ENCODE measurements at regions of chr19 and their contacts with region 1.

Region 1: DNA sequence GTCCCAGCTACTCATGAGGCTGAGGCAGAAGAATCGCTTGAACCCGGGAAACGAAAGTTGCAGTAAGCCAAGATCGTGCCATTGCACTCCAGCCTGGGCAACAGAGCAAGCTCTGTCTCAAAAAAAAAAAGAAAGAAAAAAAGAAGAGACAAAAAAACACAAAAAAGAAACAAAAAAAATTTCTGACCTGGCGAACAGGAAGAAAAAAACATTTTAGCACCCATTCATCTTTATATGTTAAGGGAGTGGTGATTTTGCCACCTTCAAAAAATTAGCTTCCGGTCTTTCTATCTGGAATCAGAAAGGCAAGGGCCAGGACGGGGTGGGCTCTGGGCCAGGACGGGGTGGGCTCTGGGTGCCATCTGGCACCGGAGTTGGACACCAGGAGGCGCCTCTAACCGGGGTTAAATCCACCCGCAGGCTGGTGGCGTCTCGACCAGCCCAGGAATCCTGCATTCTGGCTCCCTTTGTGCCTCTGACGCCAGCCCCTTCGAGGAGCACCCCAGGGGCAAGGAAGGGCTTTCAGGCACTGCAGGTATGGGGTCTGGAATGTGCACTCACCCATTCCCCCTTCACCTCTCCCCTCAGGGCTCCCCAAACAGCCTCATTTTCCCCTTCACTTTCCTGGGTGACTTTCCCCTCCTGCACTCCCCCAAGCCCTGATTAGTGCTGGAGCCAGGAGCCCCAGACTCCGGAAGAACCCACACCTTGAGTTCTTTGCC is 10.4 kb upstream of the ZSWIM4 start:
- DNase-seq: peak; percentile 85
- ATAC-seq: peak; percentile 78
- H3K4me3 Mint-ChIP-seq: peak overlapping the region; percentile 14
- H3K27ac Mint-ChIP-seq: peak overlapping the region; percentile 41
- H3K4me1 Mint-ChIP-seq: peaks cover 32% of the 10 kb centered on the region
- H3K27me3 Mint-ChIP-seq: no peaks in the 10 kb centered on the region
- CTCF ChIP-seq: peak; percentile 77

Region 2: GRCh38 chr19:13814550-13814949 is 29.7 kb after region 1 on chr19:
- CTCF ChIA-PET with region 1: no interaction called
- POLR2A ChIA-PET with region 1: no interaction called
- intact Hi-C with region 1: no loop called
- DNase-seq: no peak
- ATAC-seq: no peak
- H3K4me3 Mint-ChIP-seq: no peak overlapping the region
- H3K27ac Mint-ChIP-seq: no peak overlapping the region
- H3K4me1 Mint-ChIP-seq: no peaks in the 10 kb centered on the region
- H3K27me3 Mint-ChIP-seq: no peaks in the 10 kb centered on the region
- CTCF ChIP-seq: no peak

Region 3: GRCh38 chr19:13833330-13834243 is 48.7 kb after region 1 on chr19:
- CTCF ChIA-PET with region 1: interaction called, 15 read pairs
- POLR2A ChIA-PET with region 1: interaction called, 6 read pairs
- intact Hi-C with region 1: no loop called
- DNase-seq: peak; percentile 96
- ATAC-seq: peak; percentile 85
- H3K4me3 Mint-ChIP-seq: peak overlapping the region; percentile 68
- H3K27ac Mint-ChIP-seq: peak overlapping the region; percentile 87
- H3K4me1 Mint-ChIP-seq: peaks cover 39% of the 10 kb centered on the region
- H3K27me3 Mint-ChIP-seq: no peaks in the 10 kb centered on the region
- CTCF ChIP-seq: peak; percentile 65

Measured in activated CD8-positive, alpha-beta T cell treated with anti-CD3 and anti-CD28 coated beads for 36 hours (primary cell).